CD4-positive, alpha-beta T cell (primary cell): ENCODE measurements at regions of chr18 and their contacts with region 1.

Region 1: DNA sequence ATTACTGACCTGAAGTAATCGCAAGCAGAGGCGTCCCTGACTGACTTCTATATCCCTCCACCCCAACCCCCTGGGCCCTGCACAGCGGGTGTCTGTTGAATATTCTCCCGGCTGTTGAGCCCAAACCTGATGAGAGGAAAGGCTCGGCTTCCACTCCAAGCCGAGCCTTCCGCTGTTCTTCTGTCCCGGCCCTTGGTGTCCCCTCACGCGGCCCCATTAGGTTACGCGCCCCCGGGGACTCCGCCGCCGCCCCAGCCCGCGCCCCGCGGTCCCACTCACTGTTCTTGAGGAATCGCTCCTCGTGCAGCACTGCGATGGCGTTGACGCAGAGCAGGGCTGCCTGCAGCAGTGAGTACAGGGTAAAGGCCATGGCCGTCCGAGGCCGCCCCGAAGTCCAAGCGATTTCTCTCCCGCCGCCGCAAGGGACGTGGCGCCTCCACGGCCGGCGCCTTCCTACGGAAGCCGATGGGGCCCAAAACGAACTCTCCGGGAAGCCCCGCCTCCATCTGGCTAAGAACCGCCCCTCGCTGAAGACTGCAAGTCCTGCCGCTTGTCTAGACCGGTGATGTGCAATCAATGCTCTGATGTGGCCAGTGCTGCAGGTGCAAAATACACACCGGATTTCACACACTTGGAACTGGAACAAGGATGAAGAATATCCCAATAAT is at the start of gene IER3IP1:
- DNase-seq: peak; percentile 79 to 91 (median 84)
- ATAC-seq: peak; percentile 93
- H3K4me3 ChIP-seq: peak within 1 kb of the TSS; percentile 98
- H3K4me3 Mint-ChIP-seq: peak within 1 kb of the TSS; percentile 77
- H3K27ac ChIP-seq: no peak within 1 kb of the TSS
- H3K27ac Mint-ChIP-seq: no peak within 1 kb of the TSS
- H3K4me1 ChIP-seq: peaks cover 19% of the 10 kb centered on the region
- H3K4me1 Mint-ChIP-seq: no peaks in the 10 kb centered on the region
- H3K27me3 ChIP-seq: no peaks in the 10 kb centered on the region
- H3K27me3 Mint-ChIP-seq: no peaks in the 10 kb centered on the region
- CTCF ChIP-seq: no peak
- total RNA-seq, gene IER3IP1: 1.5 to 2.3 TPM

Region 2: DNA sequence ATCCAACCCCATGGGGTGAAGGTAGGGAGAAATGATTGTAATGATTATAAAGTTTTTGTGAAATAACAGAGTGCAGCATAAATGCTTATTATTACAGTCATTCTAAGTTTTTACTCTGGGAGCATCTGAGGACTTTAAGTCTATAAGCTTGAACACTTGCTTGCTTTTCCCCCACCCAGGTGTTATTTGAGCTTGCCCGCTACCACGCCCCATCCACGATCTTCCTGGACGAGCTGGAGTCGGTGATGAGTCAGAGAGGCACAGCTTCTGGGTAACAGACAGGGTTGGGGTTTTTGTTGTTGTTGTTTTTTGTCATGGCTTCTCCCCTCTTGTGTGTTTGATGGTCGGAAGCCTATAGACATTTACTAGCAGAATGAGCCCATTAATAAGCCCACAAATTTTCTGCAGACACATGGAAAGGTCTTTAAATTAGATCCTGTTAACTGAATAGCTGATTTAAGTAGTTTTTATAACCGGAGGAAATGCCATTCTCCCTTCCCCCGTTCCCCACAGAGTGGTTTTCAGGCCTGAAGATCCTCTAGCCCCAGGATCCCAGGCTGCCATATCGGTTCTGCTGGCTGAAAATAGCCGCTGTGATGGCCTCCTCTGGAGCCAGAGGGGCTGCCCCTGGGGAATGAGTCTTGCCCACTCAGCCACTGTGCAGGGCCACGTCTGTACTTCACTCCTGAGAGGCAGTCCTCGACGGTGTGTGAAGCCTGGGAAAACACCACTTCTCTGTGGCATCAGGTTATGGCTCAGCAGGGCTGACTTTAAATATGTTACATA is 100.8 kb before region 1 on chr18:
- CTCF ChIA-PET with region 1: no interaction called
- POLR2A ChIA-PET with region 1: no interaction called
- intact Hi-C with region 1: no loop called
- DNase-seq: no peak
- ATAC-seq: no peak
- H3K4me3 ChIP-seq: no peak overlapping the region
- H3K4me3 Mint-ChIP-seq: no peak overlapping the region
- H3K27ac ChIP-seq: no peak overlapping the region
- H3K27ac Mint-ChIP-seq: no peak overlapping the region
- H3K4me1 ChIP-seq: no peaks in the 10 kb centered on the region
- H3K4me1 Mint-ChIP-seq: no peaks in the 10 kb centered on the region
- H3K27me3 ChIP-seq: no peaks in the 10 kb centered on the region
- H3K27me3 Mint-ChIP-seq: no peaks in the 10 kb centered on the region
- CTCF ChIP-seq: no peak

Region 3: GRCh38 chr18:47143899-47144485 is 32.0 kb before region 1 on chr18:
- CTCF ChIA-PET with region 1: no interaction called
- POLR2A ChIA-PET with region 1: no interaction called
- intact Hi-C with region 1: loop called in 1 of 2 experiments (anchors 5 kb)
- DNase-seq: no peak
- ATAC-seq: no peak
- H3K4me3 ChIP-seq: no peak overlapping the region
- H3K4me3 Mint-ChIP-seq: no peak overlapping the region
- H3K27ac ChIP-seq: no peak overlapping the region
- H3K27ac Mint-ChIP-seq: no peak overlapping the region
- H3K4me1 ChIP-seq: peaks cover 2% of the 10 kb centered on the region
- H3K4me1 Mint-ChIP-seq: peaks cover 48% of the 10 kb centered on the region
- H3K27me3 ChIP-seq: no peaks in the 10 kb centered on the region
- H3K27me3 Mint-ChIP-seq: no peaks in the 10 kb centered on the region
- CTCF ChIP-seq: no peak

Region 4: GRCh38 chr18:47150029-47150823 is 25.8 kb before region 1 on chr18 and contains the start of gene HDHD2:
- CTCF ChIA-PET with region 1: no interaction called
- POLR2A ChIA-PET with region 1: no interaction called
- intact Hi-C with region 1: loop called in 1 of 2 experiments (anchors 2 kb)
- DNase-seq: peak; percentile 43 to 84 (median 72)
- ATAC-seq: peak; percentile 75
- H3K4me3 ChIP-seq: peak within 1 kb of the TSS; percentile 80
- H3K4me3 Mint-ChIP-seq: peak within 1 kb of the TSS; percentile 98
- H3K27ac ChIP-seq: peak within 1 kb of the TSS; percentile 74 to 76
- H3K27ac Mint-ChIP-seq: peak within 1 kb of the TSS; percentile 95
- H3K4me1 ChIP-seq: peaks cover 25% of the 10 kb centered on the region
- H3K4me1 Mint-ChIP-seq: peaks cover 63% of the 10 kb centered on the region
- H3K27me3 ChIP-seq: no peaks in the 10 kb centered on the region
- H3K27me3 Mint-ChIP-seq: no peaks in the 10 kb centered on the region
- CTCF ChIP-seq: no peak
- total RNA-seq, gene HDHD2: 7.3 to 8.9 TPM

Region 5: GRCh38 chr18:48161191-48161910 is 985.3 kb after region 1 on chr18:
- CTCF ChIA-PET with region 1: no interaction called
- POLR2A ChIA-PET with region 1: no interaction called
- intact Hi-C with region 1: loop called in 1 of 2 experiments (anchors 10 kb)
- DNase-seq: peak; percentile 34 to 72 (median 51)
- ATAC-seq: peak; percentile 91
- H3K4me3 ChIP-seq: peak overlapping the region; percentile 49
- H3K4me3 Mint-ChIP-seq: peak overlapping the region; percentile 77
- H3K27ac ChIP-seq: no peak overlapping the region
- H3K27ac Mint-ChIP-seq: no peak overlapping the region
- H3K4me1 ChIP-seq: peaks cover 14% of the 10 kb centered on the region
- H3K4me1 Mint-ChIP-seq: peaks cover 6% of the 10 kb centered on the region
- H3K27me3 ChIP-seq: peaks cover 0 to 6% of the 10 kb centered on the region in 2 experiments
- H3K27me3 Mint-ChIP-seq: peaks cover 25% of the 10 kb centered on the region
- CTCF ChIP-seq: no peak